Left ventricle myocardium superior (tissue), 1 donor: ENCODE measurements at regions of chr5 and their contacts with region 1.

Region 1: GRCh38 chr5:34898258-34898895 is 16.9 kb downstream of the RAD1 start:
- DNase-seq: peak; percentile 59
- ATAC-seq: peak; percentile 80

Region 2: DNA sequence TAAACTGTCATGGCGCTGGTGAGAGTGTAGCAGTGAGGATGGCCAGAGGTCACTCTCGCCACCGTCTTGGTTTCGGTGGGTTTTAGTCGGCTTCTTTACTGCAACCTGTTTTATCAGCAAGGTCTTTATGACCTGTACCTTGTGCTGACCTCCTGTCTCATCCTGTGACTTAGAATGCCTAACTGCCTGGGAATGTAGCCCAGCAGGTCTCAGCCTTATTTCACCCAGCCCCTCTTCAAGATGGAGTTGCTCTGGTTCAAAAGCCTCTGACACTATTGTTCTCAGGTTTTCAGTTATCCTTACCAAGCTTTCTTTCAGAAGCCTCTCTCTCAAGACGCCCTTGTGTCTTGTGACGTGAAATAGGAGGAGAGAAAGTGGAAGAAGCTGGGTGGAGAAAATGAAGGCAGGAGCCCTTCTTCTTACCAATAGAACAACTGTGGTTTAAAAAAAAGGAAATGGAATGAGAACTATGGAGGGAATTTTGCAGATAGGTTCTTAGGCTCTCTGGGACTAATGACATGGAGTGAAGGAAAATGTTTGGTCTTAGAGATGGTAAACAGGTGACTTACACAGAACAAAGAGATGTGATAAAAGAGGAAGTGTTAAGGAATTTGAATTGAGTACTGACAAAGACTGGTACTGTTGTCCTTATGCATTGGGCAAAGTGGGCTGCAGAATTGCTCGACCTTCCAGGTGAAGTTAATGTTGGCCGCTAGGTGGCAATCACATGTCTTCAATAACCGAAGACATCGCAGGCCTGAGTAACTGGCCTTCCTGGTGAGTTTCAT is 375.6 kb before region 1 on chr5:
- intact Hi-C with region 1: loop called (anchors 2 kb)
- DNase-seq: peak; percentile 40
- ATAC-seq: peak; percentile 84

Region 3: GRCh38 chr5:34743878-34744277 is 154.5 kb before region 1 on chr5:
- intact Hi-C with region 1: no loop called
- DNase-seq: no peak
- ATAC-seq: no peak

Region 4: DNA sequence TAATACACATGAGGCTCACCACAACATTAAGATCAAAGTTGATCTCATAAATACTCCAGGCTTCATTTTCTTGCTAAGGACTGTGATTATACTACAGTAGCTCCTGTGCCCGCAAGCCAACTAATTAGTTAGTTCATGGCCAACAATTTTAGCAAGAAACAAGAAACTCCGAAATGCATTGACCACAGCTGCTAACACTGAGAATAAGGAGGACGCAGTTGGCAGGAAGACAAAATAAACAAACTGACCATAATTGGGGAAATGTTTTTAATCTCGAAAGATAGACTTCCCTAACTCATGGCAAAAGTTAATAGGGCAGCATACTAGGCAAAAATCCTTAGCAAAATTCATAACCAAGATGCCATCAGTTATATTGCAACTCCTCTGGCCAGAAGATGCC is 603.8 kb after region 1 on chr5:
- intact Hi-C with region 1: no loop called
- DNase-seq: no peak
- ATAC-seq: no peak